Activated B cell treated with CpG ODN at 0.5 μM for 24 hours (primary cell): ENCODE measurements at regions of chr19 and their contacts with region 1.

Region 1: GRCh38 chr19:49929611-49930482 is 543 bp upstream of the NUP62 start:
- DNase-seq: peak; percentile 84
- ATAC-seq: peak; percentile 83
- H3K4me3 Mint-ChIP-seq: peak overlapping the region; percentile 92
- H3K27ac Mint-ChIP-seq: peak overlapping the region; percentile 89
- H3K4me1 Mint-ChIP-seq: peaks cover 48% of the 10 kb centered on the region
- H3K27me3 Mint-ChIP-seq: no peaks in the 10 kb centered on the region
- CTCF ChIP-seq: no peak

Region 2: DNA sequence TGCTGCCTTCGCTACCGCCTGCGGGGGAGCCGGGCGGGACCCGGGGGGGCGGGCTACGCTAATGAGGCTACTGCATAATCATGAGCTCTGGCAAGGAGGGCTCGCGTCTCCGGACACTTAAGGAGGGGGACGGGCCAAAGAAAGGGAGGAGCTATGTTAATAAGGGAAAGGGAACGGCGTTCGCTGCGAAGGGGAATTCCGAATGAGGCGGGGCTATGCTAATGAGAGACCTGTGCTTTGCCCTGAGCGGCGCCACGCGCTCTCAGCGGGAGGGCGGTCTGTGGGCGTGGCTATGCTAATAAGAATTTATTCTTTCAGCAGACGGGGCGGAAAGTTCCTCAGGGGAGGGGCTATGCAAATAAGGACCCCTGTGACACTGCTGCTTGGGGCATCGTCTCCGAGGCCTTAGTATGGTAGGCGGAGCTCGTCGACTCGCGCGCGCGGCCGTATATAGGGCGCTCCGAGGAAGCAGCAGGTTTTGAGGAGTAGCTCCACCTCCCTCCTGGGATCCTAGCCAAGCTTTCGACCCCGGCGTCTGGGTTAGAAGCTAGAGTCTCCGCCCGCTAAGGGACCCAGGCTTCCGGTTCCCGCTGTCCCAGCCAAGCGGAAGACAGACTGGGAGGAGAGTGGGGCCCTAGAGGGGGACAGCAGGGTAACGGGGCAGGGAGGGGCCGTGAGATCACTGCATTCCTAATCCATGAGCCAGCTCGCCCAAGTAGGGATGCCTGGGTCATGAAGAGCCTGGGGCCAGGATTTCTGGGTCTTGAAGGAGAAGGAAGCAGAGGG is 289.5 kb before region 1 on chr19 and contains the start of gene RRAS:
- CTCF ChIA-PET with region 1: no interaction called
- POLR2A ChIA-PET with region 1: interaction called, 10 read pairs
- intact Hi-C with region 1: no loop called
- DNase-seq: peak; percentile 97
- ATAC-seq: peak; percentile 69
- H3K4me3 Mint-ChIP-seq: peak within 1 kb of the TSS; percentile 93
- H3K27ac Mint-ChIP-seq: peak within 1 kb of the TSS; percentile 96
- H3K4me1 Mint-ChIP-seq: peaks cover 59% of the 10 kb centered on the region
- H3K27me3 Mint-ChIP-seq: no peaks in the 10 kb centered on the region
- CTCF ChIP-seq: no peak
- total RNA-seq, gene RRAS: 4.8 and 5.1 TPM in 2 replicates

Region 3: GRCh38 chr19:49817964-49818648 is 111.7 kb before region 1 on chr19 and contains the start of gene MED25:
- CTCF ChIA-PET with region 1: no interaction called
- POLR2A ChIA-PET with region 1: interaction called, 8 read pairs
- intact Hi-C with region 1: loop called (anchors 1 kb)
- DNase-seq: peak; percentile 91
- ATAC-seq: peak; percentile 59
- H3K4me3 Mint-ChIP-seq: peak within 1 kb of the TSS; percentile 98
- H3K27ac Mint-ChIP-seq: peak within 1 kb of the TSS; percentile 99
- H3K4me1 Mint-ChIP-seq: peaks cover 40% of the 10 kb centered on the region
- H3K27me3 Mint-ChIP-seq: no peaks in the 10 kb centered on the region
- CTCF ChIP-seq: no peak
- total RNA-seq, gene MED25: 70.1 and 88.8 TPM in 2 replicates

Region 4: GRCh38 chr19:49869441-49870176 is 60.2 kb before region 1 on chr19:
- CTCF ChIA-PET with region 1: no interaction called
- POLR2A ChIA-PET with region 1: interaction called, 73 read pairs
- intact Hi-C with region 1: loop called (anchors 2 kb)
- DNase-seq: peak; percentile 82
- ATAC-seq: peak; percentile 80
- H3K4me3 Mint-ChIP-seq: no peak overlapping the region
- H3K27ac Mint-ChIP-seq: no peak overlapping the region
- H3K4me1 Mint-ChIP-seq: peaks cover 39% of the 10 kb centered on the region
- H3K27me3 Mint-ChIP-seq: no peaks in the 10 kb centered on the region
- CTCF ChIP-seq: no peak

Region 5: GRCh38 chr19:49896863-49897621 is 32.8 kb before region 1 on chr19 and contains the start of gene IL4I1:
- CTCF ChIA-PET with region 1: no interaction called
- POLR2A ChIA-PET with region 1: interaction called, 229 read pairs
- intact Hi-C with region 1: loop called (anchors 1 kb)
- DNase-seq: peak; percentile 76
- ATAC-seq: peak; percentile 72
- H3K4me3 Mint-ChIP-seq: peak within 1 kb of the TSS; percentile 87
- H3K27ac Mint-ChIP-seq: peak within 1 kb of the TSS; percentile 99
- H3K4me1 Mint-ChIP-seq: peaks cover 67% of the 10 kb centered on the region
- H3K27me3 Mint-ChIP-seq: no peaks in the 10 kb centered on the region
- CTCF ChIP-seq: no peak
- total RNA-seq, gene IL4I1: 24.0 and 25.5 TPM in 2 replicates

Region 6: GRCh38 chr19:49916842-49917733 is 12.8 kb before region 1 on chr19:
- CTCF ChIA-PET with region 1: interaction called, 6 read pairs
- POLR2A ChIA-PET with region 1: interaction called, 166 read pairs
- intact Hi-C with region 1: loop called (anchors 2 kb)
- DNase-seq: peak; percentile 41
- ATAC-seq: peak; percentile 74
- H3K4me3 Mint-ChIP-seq: peak overlapping the region; percentile 77
- H3K27ac Mint-ChIP-seq: peak overlapping the region; percentile 94
- H3K4me1 Mint-ChIP-seq: peaks cover 77% of the 10 kb centered on the region
- H3K27me3 Mint-ChIP-seq: no peaks in the 10 kb centered on the region
- CTCF ChIP-seq: no peak